Activated naive CD4-positive, alpha-beta T cell treated with anti-CD3 and anti-CD28 coated beads for 36 hours (primary cell): ENCODE measurements at regions of chr6 and their contacts with region 1.

Region 1: GRCh38 chr6:30396833-30397479 is 52.0 kb downstream of the RPP21 start:
- DNase-seq: peak; percentile 90
- H3K4me3 Mint-ChIP-seq: no peak overlapping the region
- H3K27ac Mint-ChIP-seq: no peak overlapping the region
- H3K4me1 Mint-ChIP-seq: peaks cover 8% of the 10 kb centered on the region
- H3K27me3 Mint-ChIP-seq: peaks cover 29% of the 10 kb centered on the region

Region 2: DNA sequence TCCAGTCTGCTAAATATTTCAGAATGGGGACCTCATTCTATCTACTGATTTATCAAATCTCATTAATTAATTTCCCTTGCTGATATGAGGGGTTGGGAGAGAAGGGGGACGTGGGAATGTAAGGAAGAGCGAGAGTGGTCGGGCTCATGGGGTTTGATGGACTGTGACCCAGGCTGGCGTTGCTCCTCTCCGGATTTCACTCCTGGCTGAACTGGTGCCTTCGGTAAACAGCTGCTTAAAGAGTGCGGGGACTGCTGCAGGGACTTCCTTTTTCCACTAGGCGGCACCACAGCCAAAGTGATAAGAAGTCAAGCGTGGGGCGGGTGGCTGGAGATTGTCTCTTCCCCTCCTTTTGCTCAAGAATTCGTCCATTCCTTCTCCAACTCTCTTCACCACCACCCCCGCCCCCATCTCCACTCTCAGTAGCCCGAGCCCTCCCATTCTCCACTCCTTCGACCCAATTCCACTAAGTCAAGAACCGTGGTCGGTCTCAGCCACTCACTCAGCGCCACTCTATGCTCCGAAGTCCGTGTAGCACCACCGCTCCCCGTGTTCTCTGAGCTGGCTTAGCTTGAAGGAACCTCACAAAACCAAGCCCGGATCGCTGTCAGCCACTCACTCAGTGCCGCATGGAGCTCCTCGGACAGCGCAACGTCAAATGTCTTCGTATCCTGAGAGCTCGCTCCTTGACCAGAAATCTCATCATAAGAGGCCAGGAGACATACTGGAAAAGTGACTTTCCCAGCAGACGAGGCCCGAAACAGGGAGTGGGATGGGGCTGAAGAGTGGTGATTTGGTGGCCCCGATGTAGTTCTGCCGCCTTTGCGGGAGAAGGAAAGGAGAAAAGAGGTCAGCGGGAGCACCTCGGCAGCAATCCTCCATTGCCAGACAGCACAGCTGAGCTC is 293.7 kb before region 1 on chr6:
- CTCF ChIA-PET with region 1: no interaction called
- intact Hi-C with region 1: loop called (anchors 2 kb)
- DNase-seq: peak; percentile 93
- H3K4me3 Mint-ChIP-seq: peak overlapping the region; percentile 78
- H3K27ac Mint-ChIP-seq: no peak overlapping the region
- H3K4me1 Mint-ChIP-seq: peaks cover 45% of the 10 kb centered on the region
- H3K27me3 Mint-ChIP-seq: peaks cover 26% of the 10 kb centered on the region

Region 3: GRCh38 chr6:30127238-30128093 is 269.5 kb before region 1 on chr6:
- CTCF ChIA-PET with region 1: no interaction called
- intact Hi-C with region 1: no loop called
- DNase-seq: no peak
- H3K4me3 Mint-ChIP-seq: no peak overlapping the region
- H3K27ac Mint-ChIP-seq: no peak overlapping the region
- H3K4me1 Mint-ChIP-seq: peaks cover 13% of the 10 kb centered on the region
- H3K27me3 Mint-ChIP-seq: peaks cover 47% of the 10 kb centered on the region

Region 4: DNA sequence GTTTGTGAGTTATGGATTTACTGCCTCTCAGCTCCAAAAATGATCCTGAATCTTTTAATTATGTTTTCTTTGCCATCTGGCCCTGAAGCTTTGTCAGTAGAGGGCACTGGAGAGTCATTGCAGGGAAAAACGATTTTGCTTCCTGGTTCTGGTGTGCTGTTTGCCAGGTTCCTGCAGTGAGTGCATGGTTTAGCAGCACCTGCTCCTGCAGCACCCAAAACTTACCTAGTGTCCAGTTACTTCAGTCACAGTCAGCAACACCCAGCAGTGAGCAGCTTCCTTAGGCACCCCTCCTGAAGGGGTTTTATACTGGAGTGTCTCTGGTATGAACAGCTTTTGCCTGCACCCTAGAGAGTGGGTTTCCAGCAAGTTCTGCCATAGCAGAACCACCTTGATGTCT is 177.7 kb before region 1 on chr6:
- CTCF ChIA-PET with region 1: interaction called, 13 read pairs
- intact Hi-C with region 1: loop called (anchors 1 kb)
- DNase-seq: peak; percentile 73
- H3K4me3 Mint-ChIP-seq: no peak overlapping the region
- H3K27ac Mint-ChIP-seq: no peak overlapping the region
- H3K4me1 Mint-ChIP-seq: peaks cover 4% of the 10 kb centered on the region
- H3K27me3 Mint-ChIP-seq: no peaks in the 10 kb centered on the region

Region 5: DNA sequence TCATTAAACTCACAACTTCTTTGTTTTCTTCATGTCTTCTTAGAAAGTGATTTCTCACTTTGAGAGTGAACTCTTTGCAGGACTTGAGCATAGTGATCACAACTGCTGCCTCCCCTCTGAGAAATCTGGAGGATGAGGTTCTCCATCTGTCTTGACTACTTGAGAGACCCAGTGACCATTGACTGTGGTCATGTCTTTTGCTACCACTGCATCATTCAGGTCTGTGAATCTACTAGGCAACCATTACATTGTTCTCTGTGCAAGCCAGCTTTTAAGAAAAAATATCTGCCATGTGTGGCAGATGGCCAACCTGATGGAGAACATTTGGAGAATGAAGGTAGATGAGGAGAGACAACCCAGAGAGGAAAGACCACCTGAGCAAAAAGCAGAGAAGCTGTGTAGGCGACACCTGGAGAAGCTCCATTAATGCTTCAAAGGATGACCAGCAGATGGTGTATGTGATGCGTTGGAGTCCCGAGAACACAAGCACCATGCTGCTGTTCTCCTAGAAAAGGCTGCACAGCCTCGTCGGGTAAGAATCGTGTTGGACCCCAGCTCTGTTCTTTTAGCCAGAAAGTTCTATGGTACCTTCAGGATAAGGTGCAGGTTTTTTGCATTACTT is 158.7 kb before region 1 on chr6:
- CTCF ChIA-PET with region 1: no interaction called
- intact Hi-C with region 1: loop called (anchors 1 kb)
- DNase-seq: peak; percentile 55
- H3K4me3 Mint-ChIP-seq: no peak overlapping the region
- H3K27ac Mint-ChIP-seq: no peak overlapping the region
- H3K4me1 Mint-ChIP-seq: no peaks in the 10 kb centered on the region
- H3K27me3 Mint-ChIP-seq: peaks cover 11% of the 10 kb centered on the region

Region 6: GRCh38 chr6:30357678-30358540 is 39.0 kb before region 1 on chr6:
- CTCF ChIA-PET with region 1: interaction called, 10 read pairs
- intact Hi-C with region 1: loop called (anchors 1 kb)
- DNase-seq: peak; percentile 70
- H3K4me3 Mint-ChIP-seq: peak overlapping the region; percentile 77
- H3K27ac Mint-ChIP-seq: no peak overlapping the region
- H3K4me1 Mint-ChIP-seq: peaks cover 4% of the 10 kb centered on the region
- H3K27me3 Mint-ChIP-seq: peaks cover 37% of the 10 kb centered on the region